ENCODE measurements at regions of chr14 and their contacts with region 1.

Region 1: DNA sequence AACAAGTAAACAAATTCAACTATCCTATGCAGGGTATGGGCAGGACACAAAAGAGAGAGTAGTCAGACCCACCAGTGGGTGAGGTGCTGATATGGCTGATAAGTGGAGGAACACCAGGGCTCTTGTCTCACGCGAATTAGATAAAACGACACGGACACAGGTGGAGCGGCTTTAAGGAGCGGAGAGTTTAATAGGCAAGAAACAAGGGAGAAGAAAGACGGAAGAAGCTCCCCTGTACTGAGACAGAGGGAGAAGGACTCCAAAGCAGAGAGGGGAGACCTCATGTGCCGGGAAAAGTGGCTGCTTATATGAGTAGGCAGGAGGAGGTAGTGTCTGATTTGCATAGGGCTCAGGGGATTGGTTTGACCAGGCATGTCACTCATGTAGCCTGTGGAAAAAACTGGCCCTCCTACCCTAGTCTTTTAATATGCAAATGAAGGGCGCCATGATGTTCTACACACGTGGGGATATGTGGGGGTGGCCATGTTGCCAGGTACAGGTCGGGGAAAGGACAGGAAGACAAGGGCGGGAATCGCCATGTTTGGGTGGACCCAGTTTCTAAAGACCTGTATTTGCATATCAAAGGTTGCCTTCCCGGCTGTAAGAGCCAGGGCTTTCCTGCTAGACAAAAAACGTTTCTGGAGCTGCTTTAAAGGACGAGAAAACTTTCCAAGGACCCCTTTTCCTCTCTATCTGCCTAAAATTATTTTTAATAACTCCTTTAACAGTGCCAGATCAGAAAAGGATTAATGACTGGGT is 28.8 kb downstream of the RPGRIP1 start:
- DNase-seq: peak; percentile 97
- H3K4me3 Mint-ChIP-seq: peak overlapping the region; percentile 78
- H3K27ac Mint-ChIP-seq: peak overlapping the region; percentile 91
- H3K4me1 Mint-ChIP-seq: peaks cover 14% of the 10 kb centered on the region
- H3K27me3 Mint-ChIP-seq: peaks cover 10% of the 10 kb centered on the region
- CTCF ChIP-seq: no peak

Region 2: DNA sequence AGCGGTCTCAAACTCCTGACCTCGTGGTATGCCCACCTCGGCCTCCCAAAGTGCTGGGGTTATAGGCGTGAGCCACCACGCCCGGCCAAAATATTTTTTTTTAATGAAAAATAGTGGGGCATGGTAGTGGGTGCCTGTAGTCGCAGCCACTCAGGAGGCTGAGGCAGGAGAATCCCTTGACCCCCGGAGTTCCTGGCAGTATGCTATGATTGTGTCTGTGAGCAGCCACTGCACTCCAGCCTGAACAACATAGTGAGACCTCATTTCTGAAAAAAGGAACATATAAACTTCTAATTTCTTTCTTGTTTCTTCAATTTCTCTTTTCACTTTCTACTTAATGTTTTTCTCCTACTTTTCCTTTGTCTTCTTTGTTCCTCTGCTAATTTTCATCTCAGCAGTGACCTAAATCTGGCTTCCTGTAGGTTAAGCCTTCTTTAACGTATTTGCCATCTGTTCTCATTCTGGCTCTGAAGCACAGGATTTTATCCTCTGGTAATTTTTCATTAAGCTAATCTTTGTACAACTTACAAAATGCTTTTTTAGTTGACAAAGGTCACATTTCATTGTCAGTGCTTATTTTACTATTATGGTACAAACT is 33.3 kb before region 1 on chr14:
- CTCF ChIA-PET with region 1: no interaction called
- POLR2A ChIA-PET with region 1: interaction called, 11 read pairs
- intact Hi-C with region 1: no loop called
- DNase-seq: no peak
- H3K4me3 Mint-ChIP-seq: no peak overlapping the region
- H3K27ac Mint-ChIP-seq: no peak overlapping the region
- H3K4me1 Mint-ChIP-seq: no peaks in the 10 kb centered on the region
- H3K27me3 Mint-ChIP-seq: no peaks in the 10 kb centered on the region
- CTCF ChIP-seq: no peak

Region 3: GRCh38 chr14:21320913-21321312 is 12.3 kb after region 1 on chr14:
- CTCF ChIA-PET with region 1: interaction called, 3 read pairs
- POLR2A ChIA-PET with region 1: interaction called, 14 read pairs
- intact Hi-C with region 1: no loop called
- DNase-seq: no peak
- H3K4me3 Mint-ChIP-seq: no peak overlapping the region
- H3K27ac Mint-ChIP-seq: no peak overlapping the region
- H3K4me1 Mint-ChIP-seq: no peaks in the 10 kb centered on the region
- H3K27me3 Mint-ChIP-seq: peaks cover 27% of the 10 kb centered on the region
- CTCF ChIP-seq: no peak